ENCODE measurements at regions of chr2 and their contacts with region 1.

Region 1: DNA sequence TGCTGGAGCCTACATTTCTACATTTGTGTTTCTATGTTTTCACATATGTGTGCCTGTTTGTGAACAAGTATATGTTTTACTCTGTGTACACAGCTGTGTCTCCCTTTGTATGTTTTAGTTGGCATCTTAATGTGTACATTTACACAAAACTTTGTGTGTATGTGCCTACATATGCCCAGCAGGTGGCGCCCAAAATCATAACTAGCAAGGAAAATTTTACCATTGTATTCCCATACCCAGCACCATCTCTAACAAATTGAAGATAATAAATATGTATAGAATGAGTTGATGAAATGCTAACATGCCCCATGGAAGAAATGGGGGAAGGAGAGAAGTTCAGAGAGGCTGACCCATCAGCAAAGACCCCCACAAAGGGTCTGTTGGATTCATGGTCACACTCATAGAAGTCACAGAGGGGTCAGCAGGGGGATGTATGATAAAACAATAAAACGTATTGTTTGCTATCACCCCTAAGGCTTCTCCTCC is 48.1 kb downstream of the PKDCC start:
- DNase-seq: peak; percentile 61 to 85
- H3K4me3 ChIP-seq: no peak overlapping the region
- H3K27ac ChIP-seq: no peak overlapping the region
- H3K4me1 ChIP-seq: no peaks in the 10 kb centered on the region
- H3K27me3 ChIP-seq: no peaks in the 10 kb centered on the region
- CTCF ChIP-seq: peak; percentile 71 to 94 (median 90)
- POLR2A ChIP-seq: no peak

Region 2: GRCh38 chr2:41933585-41934320 is 162.2 kb before region 1 on chr2:
- intact Hi-C with region 1: no loop called
- DNase-seq: peak; percentile 55 to 69
- H3K4me3 ChIP-seq: no peak overlapping the region
- H3K27ac ChIP-seq: peak overlapping the region; percentile 83 to 85
- H3K4me1 ChIP-seq: peaks cover 9 to 10% of the 10 kb centered on the region in 2 donors
- H3K27me3 ChIP-seq: no peaks in the 10 kb centered on the region
- CTCF ChIP-seq: no peak
- POLR2A ChIP-seq: no peak

Region 3: GRCh38 chr2:42047488-42048298 is 48.3 kb before region 1 on chr2 and contains the start of gene PKDCC:
- intact Hi-C with region 1: no loop called
- DNase-seq: peak; percentile 87 to 89
- H3K4me3 ChIP-seq: peak within 1 kb of the TSS; percentile 83 to 90
- H3K27ac ChIP-seq: peak within 1 kb of the TSS; percentile 96 to 99
- H3K4me1 ChIP-seq: peaks cover 0 to 24% of the 10 kb centered on the region in 2 donors
- H3K27me3 ChIP-seq: no peaks in the 10 kb centered on the region
- CTCF ChIP-seq: peak in 1 of 4 experiments; percentile 15
- POLR2A ChIP-seq: peak; percentile 47 to 96
- total RNA-seq, gene PKDCC: 34.1 to 244 (median 109) TPM

Region 4: DNA sequence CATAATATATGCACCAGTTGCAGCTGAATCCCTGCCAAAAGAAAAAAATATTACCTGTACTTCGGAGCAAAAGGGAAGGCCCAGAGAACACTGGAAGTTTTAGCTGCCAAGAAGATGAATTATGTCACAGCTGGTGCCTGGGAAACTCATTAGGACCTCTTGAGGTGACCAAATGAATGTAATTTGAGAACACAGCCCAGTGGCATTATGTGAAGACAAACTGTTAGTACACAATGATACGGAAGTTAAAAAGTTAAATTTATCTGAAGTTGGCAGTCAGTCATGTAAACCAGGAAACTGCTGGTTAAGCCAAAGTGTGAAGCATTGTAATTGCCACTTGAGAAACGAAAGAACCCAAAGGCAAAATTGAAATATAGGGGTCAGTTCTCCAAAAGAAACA is 153.9 kb after region 1 on chr2:
- intact Hi-C with region 1: loop called (anchors 10 kb)
- DNase-seq: no peak
- H3K4me3 ChIP-seq: no peak overlapping the region
- H3K27ac ChIP-seq: peak overlapping the region in 1 of 2 donors; percentile 52
- H3K4me1 ChIP-seq: no peaks in the 10 kb centered on the region
- H3K27me3 ChIP-seq: no peaks in the 10 kb centered on the region
- CTCF ChIP-seq: no peak
- POLR2A ChIP-seq: no peak

Region 5: DNA sequence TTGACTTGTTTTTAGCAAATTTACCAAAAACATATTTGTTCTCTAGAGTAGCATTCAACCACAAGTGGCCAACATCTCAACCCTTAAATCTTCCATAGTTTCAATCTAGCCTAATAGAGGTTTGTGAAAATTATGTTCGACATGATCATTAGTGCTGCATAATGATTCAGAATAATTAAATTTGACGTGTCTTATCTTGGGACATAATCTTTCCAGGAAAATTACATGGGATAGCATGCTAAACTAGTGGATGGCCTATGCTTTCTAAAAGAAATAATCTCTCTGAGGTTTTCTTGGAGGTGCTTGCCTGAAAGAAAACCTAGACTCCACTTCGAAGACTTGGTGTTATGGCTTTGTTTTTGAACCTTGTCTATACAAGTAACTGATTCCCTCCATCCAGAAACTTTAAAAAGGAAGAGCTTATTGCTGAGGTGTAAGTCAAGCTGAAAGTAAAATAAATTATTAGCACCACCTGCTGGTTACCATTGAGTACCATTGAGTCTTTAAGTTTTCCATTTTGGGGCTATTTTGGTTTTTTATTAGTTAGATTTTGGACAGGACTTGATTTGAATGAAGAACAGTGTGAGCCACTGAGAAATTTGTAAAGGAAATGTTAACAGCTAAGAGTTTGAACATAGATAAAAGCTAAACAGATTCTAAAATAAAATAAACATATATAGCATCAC is 232.3 kb after region 1 on chr2:
- intact Hi-C with region 1: loop called (anchors 5 kb)
- DNase-seq: no peak
- H3K4me3 ChIP-seq: no peak overlapping the region
- H3K27ac ChIP-seq: no peak overlapping the region
- H3K4me1 ChIP-seq: peaks cover 0 to 9% of the 10 kb centered on the region in 2 donors
- H3K27me3 ChIP-seq: no peaks in the 10 kb centered on the region
- CTCF ChIP-seq: peak; percentile 43 to 56 (median 48)
- POLR2A ChIP-seq: no peak

Region 6: GRCh38 chr2:42360890-42361727 is 265.1 kb after region 1 on chr2 and contains the start of gene COX7A2L:
- intact Hi-C with region 1: loop called (anchors 10 kb)
- DNase-seq: peak; percentile 97 to 98
- H3K4me3 ChIP-seq: peak within 1 kb of the TSS; percentile 87 to 99
- H3K27ac ChIP-seq: peak within 1 kb of the TSS; percentile 87 to 95
- H3K4me1 ChIP-seq: peaks cover 0 to 7% of the 10 kb centered on the region in 2 donors
- H3K27me3 ChIP-seq: no peaks in the 10 kb centered on the region
- CTCF ChIP-seq: peak; percentile 7 to 56 (median 38)
- POLR2A ChIP-seq: peak; percentile 46 to 71
- total RNA-seq, gene COX7A2L: 46.6 to 196 (median 126) TPM

Measured in uterus (tissue), 4 donors.